ENCODE measurements at regions of chr13 and their contacts with region 1.

Region 1: DNA sequence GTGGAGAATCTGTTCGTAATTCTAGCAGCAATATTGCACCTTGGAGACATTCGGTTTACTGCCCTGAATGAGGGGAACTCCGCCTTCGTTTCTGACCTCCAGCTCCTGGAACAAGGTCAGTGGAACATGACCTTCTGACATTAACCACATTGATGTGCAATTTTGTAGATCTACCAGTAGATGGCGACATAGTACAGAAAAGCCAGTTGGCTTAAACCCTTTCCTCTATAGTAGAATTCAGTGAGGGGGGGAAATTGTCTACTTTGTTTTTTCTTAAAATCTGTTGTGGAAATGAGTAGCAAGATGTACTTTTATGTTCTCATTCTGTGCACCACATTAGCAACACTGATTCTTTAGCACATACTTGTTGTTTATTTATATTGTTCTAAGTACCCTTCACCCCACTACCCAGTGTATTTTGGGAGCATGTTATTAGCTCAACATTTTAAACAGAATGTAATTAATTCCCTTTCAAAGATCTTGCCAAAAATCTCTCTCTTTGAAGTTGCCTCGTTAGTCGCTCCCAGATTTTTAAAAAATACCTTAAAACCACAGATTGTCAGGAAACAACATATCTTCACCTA is 332.2 kb downstream of the MYO16 start:
- DNase-seq: no peak
- H3K4me3 ChIP-seq: no peak overlapping the region
- H3K27ac ChIP-seq: no peak overlapping the region
- H3K4me1 ChIP-seq: peaks cover 0 to 27% (median 20%) of the 10 kb centered on the region in 4 donors
- H3K27me3 ChIP-seq: no peaks in the 10 kb centered on the region
- CTCF ChIP-seq: peak; percentile 85 to 89 (median 89)
- EP300 ChIP-seq: no peak
- POLR2A ChIP-seq: no peak

Region 2: DNA sequence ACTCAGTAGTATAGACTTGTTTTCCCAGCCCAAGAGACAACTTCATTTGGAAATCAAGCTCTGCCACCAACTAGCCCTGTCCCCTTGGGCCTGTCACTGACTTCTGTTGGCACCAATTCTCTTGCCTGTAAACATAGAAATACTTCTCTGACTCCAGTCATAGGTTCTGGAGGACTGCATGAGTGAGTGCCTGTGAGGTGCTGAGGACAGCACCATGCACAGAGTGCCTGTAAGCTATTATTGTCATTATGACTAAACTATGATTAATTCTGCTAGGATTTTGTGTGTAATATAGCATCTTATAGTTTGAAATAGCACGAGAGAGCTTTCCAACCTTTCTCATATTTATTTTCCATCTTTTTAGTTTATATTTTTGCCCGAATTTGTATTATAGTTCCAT is 84.3 kb before region 1 on chr13:
- intact Hi-C with region 1: no loop called
- DNase-seq: no peak
- H3K4me3 ChIP-seq: no peak overlapping the region
- H3K27ac ChIP-seq: no peak overlapping the region
- H3K4me1 ChIP-seq: no peaks in the 10 kb centered on the region
- H3K27me3 ChIP-seq: no peaks in the 10 kb centered on the region
- CTCF ChIP-seq: no peak
- EP300 ChIP-seq: no peak
- POLR2A ChIP-seq: no peak

Region 3: DNA sequence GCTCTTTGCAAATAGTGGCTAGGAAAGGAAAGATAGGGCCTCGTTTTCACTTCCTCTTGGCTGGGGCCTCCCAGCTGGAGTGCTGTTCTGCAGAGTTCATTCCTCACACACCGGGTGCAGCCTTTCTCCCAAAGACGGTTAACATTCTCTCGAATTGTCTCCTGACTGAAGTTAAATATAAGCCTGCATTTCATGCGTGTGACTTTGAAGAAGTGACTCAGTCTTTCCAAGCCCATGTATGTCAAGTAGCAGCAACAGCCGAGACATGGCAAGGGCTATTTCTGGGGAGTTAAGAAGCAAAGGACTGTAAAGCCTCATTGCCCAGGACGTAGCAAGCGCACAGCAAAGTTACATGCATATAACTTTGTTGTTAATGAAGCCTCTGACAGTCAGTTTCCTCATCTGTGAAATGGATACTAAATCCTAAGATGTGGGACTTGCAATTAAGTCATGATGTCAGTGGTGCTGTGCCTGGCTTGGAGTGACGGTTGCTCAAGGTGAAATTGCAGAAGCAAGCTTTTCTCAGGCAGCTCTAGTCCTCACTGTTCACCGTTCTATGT is 170.1 kb after region 1 on chr13:
- intact Hi-C with region 1: loop called (anchors 10 kb)
- DNase-seq: no peak
- H3K4me3 ChIP-seq: no peak overlapping the region
- H3K27ac ChIP-seq: peak overlapping the region in 3 of 4 donors; percentile 50 to 63 (median 60)
- H3K4me1 ChIP-seq: peaks cover 5 to 18% (median 13%) of the 10 kb centered on the region in 4 donors
- H3K27me3 ChIP-seq: no peaks in the 10 kb centered on the region
- CTCF ChIP-seq: no peak
- EP300 ChIP-seq: no peak
- POLR2A ChIP-seq: no peak